ENCODE measurements at regions of chr3 and their contacts with region 1.

Region 1: DNA sequence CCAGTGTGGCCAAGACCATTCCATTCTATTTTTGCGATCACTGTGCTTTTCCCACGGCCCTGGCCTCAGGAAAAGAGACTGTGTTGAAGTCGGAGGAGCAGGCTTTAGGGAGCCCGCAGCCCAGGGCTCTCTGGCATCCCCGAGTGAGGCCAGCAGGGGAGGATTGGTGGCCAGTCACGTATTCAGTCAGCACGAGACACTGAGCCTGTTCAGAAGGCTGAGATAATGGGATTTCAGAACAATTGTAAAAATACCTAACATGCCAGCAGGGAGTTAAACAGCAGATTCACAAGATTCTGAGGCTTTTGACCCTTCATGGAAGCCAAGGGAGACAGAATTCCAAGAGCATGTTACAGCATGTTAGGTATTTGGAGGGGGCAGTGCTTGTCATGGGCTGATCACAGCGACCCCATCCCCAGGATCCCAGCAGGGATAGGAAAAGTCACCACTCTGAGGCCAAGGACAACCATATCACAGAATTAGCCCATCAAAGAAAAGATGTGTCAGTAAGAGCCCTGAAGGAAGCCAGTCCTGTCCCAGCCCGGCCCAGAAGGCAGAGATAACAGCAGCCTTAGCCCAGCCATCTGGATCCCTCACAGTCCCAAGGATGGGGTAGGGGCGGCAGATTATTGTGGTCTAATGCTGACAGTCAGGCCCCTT is 40.6 kb downstream of the AMOTL2 start:
- DNase-seq: peak; percentile 88 to 93
- H3K4me3 ChIP-seq: no peak overlapping the region
- H3K4me3 Mint-ChIP-seq: peak overlapping the region; percentile 55
- H3K27ac Mint-ChIP-seq: peak overlapping the region; percentile 95
- H3K4me1 ChIP-seq: peaks cover 93% of the 10 kb centered on the region
- H3K4me1 Mint-ChIP-seq: peaks cover 81% of the 10 kb centered on the region
- H3K27me3 ChIP-seq: no peaks in the 10 kb centered on the region
- H3K27me3 Mint-ChIP-seq: no peaks in the 10 kb centered on the region
- CTCF ChIP-seq: peak; percentile 36 to 39

Region 2: DNA sequence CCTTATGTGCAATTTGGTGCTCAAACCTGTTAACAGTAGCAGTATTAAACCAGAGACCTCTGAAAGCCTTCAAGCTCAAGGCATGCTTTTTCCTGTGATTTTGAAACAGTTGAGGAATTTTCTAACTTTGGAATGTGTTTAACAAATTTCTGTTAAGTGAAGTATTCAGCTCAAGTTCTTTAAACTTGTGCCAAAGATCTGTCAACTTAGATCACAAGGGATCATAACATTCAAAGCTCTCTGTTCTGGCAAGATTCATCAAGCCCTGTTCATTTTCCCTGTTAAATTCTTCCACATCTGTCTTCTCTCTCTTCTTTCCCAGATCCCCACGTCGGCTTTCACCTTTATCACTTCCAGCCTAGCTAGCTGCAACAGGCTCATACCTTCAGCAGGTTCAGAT is 54.2 kb before region 1 on chr3:
- CTCF ChIA-PET with region 1: no interaction called
- POLR2A ChIA-PET with region 1: no interaction called
- intact Hi-C with region 1: no loop called
- DNase-seq: no peak
- H3K4me3 ChIP-seq: no peak overlapping the region
- H3K4me3 Mint-ChIP-seq: no peak overlapping the region
- H3K27ac Mint-ChIP-seq: no peak overlapping the region
- H3K4me1 ChIP-seq: peaks cover 20% of the 10 kb centered on the region
- H3K4me1 Mint-ChIP-seq: peaks cover 15% of the 10 kb centered on the region
- H3K27me3 ChIP-seq: no peaks in the 10 kb centered on the region
- H3K27me3 Mint-ChIP-seq: no peaks in the 10 kb centered on the region
- CTCF ChIP-seq: no peak

Region 3: GRCh38 chr3:134364061-134364935 is 30.6 kb after region 1 on chr3:
- CTCF ChIA-PET with region 1: interaction called, 5 read pairs
- POLR2A ChIA-PET with region 1: interaction called, 15 read pairs
- intact Hi-C with region 1: no loop called
- DNase-seq: peak; percentile 95 to 97
- H3K4me3 ChIP-seq: 0 out of 2 replicates have a peak overlapping the region, but pooled peaks have one; percentile 6
- H3K4me3 Mint-ChIP-seq: peak overlapping the region; percentile 70
- H3K27ac Mint-ChIP-seq: peak overlapping the region; percentile 82
- H3K4me1 ChIP-seq: peaks cover 95% of the 10 kb centered on the region
- H3K4me1 Mint-ChIP-seq: peaks cover 42% of the 10 kb centered on the region
- H3K27me3 ChIP-seq: no peaks in the 10 kb centered on the region
- H3K27me3 Mint-ChIP-seq: no peaks in the 10 kb centered on the region
- CTCF ChIP-seq: no peak

Region 4: DNA sequence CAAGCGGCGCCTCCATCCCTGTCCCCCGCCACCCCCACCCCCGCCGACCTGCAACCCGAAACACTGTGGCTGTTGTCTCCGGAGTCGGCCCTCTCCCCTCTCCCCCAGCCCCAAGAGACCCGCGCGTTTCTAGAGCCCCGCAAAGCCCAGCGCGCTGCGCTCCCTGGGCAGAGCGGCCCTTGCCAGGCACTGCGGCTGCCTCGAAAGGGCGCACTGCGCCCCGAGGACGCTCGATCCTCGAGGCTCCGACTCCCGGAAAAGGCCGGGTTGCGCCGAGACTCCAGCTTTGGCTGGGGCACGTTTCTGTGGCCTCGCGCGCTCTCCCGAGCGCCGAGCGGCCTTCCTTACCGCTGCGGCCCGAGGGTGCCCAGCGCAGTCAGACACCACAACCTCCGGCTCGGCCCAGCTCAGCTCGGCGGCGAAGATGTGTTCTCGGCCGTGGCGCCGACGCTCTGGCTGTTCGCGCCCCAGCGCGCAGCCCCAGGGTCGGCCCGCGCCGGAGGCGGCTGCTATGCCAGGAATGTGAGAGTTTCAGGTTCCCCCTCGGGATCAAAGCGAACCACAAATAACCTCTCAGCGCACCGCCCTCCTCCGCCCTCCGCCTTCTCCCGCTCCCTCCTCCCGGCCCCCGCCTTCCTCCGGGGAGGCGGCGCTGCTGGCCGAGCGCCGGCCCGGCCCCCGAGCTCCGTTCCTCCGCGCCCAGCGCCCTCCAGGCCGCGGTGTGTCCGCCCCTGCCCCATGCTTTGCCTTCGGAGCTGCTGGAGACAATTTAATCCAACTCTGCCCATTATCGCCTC is 40.5 kb after region 1 on chr3 and contains the start of gene AMOTL2:
- CTCF ChIA-PET with region 1: no interaction called
- POLR2A ChIA-PET with region 1: interaction called, 11 read pairs
- intact Hi-C with region 1: loop called (anchors 1 kb)
- DNase-seq: peak; percentile 97
- H3K4me3 ChIP-seq: peak within 1 kb of the TSS; percentile 92
- H3K4me3 Mint-ChIP-seq: peak within 1 kb of the TSS; percentile 85
- H3K27ac Mint-ChIP-seq: peak within 1 kb of the TSS; percentile 77
- H3K4me1 ChIP-seq: peaks cover 61% of the 10 kb centered on the region
- H3K4me1 Mint-ChIP-seq: peaks cover 43% of the 10 kb centered on the region
- H3K27me3 ChIP-seq: no peaks in the 10 kb centered on the region
- H3K27me3 Mint-ChIP-seq: no peaks in the 10 kb centered on the region
- CTCF ChIP-seq: no peak
- total RNA-seq, gene AMOTL2: 220 and 271 TPM in 2 replicates